ENCODE measurements at regions of chr17 and their contacts with region 1.

Region 1: DNA sequence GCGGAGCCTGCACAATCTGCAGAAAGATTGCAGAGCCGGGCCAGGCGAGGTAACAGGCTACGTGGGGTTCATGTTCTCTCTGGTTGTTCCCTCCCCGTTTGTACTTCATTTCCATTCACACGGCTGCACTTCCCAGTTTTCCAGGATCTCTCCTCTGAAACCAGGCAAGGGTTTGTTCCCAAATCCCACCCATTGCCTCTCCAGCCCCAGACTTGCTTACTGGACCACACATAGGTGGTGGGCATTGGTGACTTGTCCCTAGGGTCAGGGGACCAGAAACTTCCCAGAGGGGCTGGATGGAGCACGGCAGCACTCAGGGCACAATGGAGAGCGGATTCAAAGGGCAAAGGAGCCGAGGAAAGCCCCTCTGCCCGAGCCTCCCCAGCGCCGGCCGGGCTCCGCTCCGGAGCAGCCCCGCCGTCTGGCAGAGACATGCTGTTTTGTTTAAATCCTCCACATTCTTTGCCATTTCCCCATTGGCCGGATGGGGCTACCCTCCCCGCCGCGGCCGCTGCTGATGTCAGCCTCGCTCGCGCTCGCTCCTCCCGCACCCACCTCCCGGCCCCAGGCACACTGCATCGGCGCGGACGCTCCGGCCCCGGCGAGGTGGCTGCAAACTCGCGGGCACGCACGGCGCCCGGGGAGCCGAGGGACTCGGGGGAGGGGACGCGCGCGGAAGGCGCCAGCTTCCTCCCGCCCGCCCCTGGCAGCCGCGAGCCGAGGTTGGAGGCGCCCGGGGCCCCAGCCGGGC is at the start of gene PITPNC1:
- DNase-seq: peak; percentile 93
- ATAC-seq: peak; percentile 78
- H3K4me3 Mint-ChIP-seq: peak within 1 kb of the TSS; percentile 83
- H3K27ac Mint-ChIP-seq: peak within 1 kb of the TSS; percentile 87
- H3K4me1 Mint-ChIP-seq: peaks cover 42% of the 10 kb centered on the region
- H3K27me3 Mint-ChIP-seq: no peaks in the 10 kb centered on the region
- total RNA-seq, gene PITPNC1: 44.9 to 67.6 TPM

Region 2: DNA sequence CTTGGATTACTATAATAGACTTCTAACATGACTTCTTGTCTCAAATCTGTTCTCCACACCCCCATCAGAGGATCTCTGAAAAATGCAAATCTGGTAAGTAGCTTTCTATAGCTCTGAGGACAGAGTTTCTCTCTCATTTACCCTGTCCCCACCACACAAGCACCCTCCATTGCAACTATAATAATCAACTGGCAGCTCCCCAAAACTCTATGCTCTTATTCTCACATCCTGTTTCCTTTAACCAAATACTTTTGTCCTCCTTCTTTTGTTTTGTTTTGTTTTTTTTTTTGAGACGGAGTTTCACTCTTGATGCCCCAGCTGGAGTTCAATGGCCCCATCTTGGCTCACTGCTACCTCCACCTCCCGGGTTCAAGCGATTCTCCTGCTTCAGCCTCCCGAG is 205.4 kb before region 1 on chr17:
- CTCF ChIA-PET with region 1: no interaction called
- DNase-seq: no peak
- ATAC-seq: no peak
- H3K4me3 Mint-ChIP-seq: no peak overlapping the region
- H3K27ac Mint-ChIP-seq: no peak overlapping the region
- H3K4me1 Mint-ChIP-seq: peaks cover 6% of the 10 kb centered on the region
- H3K27me3 Mint-ChIP-seq: no peaks in the 10 kb centered on the region

Region 3: DNA sequence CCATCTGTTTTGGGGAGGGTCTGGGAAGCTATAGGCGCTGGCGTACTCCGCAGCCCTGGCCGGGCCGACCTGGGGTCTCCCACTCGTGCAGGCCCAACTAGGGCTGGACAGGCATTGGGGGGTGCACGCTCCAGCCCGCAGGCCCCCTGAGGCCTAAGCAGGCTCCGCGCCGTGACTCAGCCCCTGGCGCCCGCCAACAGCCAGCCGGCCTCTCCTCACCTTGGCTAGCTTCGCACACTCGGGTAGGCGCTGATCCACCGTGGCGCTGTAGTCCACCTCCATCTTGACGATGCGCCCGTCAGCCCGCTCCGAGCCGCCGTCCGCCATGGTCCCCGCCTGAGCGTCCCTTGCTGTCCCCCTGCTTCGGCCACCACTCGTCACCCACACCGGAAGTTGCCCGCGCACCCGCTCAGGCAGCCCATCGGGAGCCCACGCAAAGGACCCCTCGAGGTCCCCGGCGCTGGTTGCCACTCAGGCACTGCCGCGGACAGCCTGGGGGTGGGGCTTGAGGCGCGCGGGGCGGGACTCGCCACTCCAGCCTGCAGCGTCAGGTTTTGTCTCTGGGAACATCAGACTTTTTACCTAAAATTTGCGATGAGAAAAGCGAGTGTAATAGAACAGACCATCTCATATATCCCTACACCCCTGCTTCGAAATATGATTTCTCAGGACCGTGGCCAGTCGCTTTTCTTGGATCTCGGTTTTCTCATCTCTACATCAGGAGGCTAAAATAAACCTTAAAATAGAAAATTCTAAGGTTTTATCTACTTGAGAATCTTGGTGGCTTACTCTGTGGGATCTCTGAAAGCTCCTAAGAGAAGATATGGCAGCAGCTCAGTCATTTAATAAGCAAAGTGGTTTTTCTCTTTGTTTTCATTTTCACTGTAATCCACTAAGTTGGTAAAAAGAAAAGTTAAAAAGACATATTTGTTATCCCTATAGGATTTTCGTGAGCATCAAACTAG is 10.4 kb before region 1 on chr17 and contains the start of gene PSMD12:
- CTCF ChIA-PET with region 1: interaction called, 47 read pairs
- DNase-seq: peak; percentile 96
- ATAC-seq: peak; percentile 88
- H3K4me3 Mint-ChIP-seq: peak within 1 kb of the TSS; percentile 89
- H3K27ac Mint-ChIP-seq: peak within 1 kb of the TSS; percentile 89
- H3K4me1 Mint-ChIP-seq: peaks cover 52% of the 10 kb centered on the region
- H3K27me3 Mint-ChIP-seq: no peaks in the 10 kb centered on the region
- total RNA-seq, gene PSMD12: 52.8 to 63.2 TPM

Region 4: DNA sequence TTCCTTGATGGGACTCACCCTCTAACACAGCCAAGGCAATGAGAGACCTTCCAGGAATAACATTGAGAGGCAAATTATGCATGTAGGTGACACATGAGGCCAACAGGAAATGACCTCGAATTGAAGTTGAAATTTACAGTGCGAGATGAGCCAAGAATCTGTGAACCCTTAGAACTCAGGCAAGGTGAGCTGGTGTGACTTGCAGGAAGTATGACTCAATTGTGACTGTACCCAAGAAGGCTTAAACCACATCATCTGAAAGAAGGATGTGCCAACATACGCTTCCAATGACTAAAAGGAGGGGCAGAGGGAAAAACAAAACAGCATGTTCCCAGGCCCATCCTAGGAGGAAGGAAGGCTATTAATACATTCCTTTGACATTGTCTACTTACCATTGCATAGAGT is 45.0 kb after region 1 on chr17:
- CTCF ChIA-PET with region 1: interaction called, 17 read pairs
- DNase-seq: peak; percentile 77
- ATAC-seq: peak; percentile 98
- H3K4me3 Mint-ChIP-seq: no peak overlapping the region
- H3K27ac Mint-ChIP-seq: peak overlapping the region; percentile 77
- H3K4me1 Mint-ChIP-seq: peaks cover 57% of the 10 kb centered on the region
- H3K27me3 Mint-ChIP-seq: no peaks in the 10 kb centered on the region

Region 5: DNA sequence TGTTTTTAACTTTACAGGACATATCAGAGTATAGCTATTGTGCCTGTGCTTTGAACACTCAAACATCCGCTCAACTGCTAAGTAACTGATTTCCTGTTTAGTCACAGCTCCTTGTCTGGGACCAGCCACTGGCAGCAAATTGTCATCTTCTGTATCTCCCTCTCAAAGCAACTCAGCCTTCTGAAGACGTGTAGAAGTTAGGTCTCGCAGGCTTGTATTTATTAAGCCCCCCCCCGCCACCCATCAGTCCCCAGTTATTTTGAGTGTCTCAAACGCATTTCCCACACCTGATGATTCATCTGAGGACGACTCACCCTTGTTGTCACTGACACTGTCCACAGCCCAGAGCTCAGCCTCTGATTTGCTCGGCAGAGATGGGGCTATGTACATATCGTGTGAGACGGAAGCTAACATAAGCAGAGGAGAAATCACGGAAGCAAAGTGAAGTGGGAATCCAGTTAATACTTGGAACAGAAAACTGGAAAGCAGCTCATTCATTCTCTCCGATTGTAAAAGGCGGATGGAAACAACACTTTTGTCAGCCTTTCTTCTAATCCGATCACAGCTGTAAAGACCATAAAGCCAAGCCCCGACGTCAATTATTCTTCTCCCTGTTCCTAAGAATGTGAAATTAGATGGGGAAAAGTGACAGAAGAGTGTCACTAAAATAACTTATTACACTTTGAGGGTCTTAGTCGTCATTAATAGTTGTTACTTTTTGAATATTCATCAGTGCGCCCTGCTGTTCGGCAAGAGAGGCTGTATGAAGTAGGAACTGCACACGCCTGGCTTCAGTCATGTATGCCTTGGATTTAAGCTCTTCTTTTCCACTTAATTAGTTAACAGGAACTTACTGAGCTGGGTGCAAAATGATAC is 64.4 kb after region 1 on chr17:
- CTCF ChIA-PET with region 1: interaction called, 34 read pairs
- DNase-seq: peak; percentile 89
- ATAC-seq: peak; percentile 92
- H3K4me3 Mint-ChIP-seq: peak overlapping the region; percentile 73
- H3K27ac Mint-ChIP-seq: peak overlapping the region; percentile 99
- H3K4me1 Mint-ChIP-seq: peaks cover 55% of the 10 kb centered on the region
- H3K27me3 Mint-ChIP-seq: no peaks in the 10 kb centered on the region

Region 6: DNA sequence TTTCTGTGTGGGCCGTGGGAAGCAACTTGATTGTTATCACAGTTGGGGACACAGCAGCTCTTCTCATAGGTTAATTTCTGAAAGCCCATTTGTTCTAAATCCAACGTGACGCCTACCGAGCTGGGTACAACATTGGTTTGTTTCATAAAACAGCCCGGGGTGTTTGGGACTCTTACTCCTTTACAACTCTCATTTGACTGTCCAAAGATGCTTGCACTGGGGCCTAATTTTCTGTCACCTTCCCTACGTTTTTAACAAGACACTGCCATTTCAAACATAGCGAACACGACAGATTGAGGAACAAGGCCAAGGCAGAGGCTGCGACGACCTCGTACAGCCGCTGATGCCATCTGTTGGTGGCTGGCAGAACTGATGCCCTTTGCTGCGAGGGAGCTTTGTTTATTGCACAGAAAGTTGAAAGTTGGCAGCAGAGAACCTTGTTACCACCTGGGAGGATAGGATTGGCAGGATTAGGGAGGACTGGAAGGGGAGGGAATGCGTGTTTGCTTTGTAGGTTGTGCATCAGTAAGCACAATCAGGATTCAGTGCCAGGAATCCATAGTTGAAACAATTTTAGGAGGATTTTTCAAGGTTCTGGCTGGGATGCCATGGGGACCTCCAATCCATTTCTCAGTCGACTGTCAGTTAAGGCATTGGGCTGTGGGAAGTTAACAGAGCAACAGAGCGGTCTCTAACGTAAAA is 98.5 kb after region 1 on chr17:
- CTCF ChIA-PET with region 1: interaction called, 209 read pairs
- DNase-seq: peak; percentile 92
- ATAC-seq: peak; percentile 84
- H3K4me3 Mint-ChIP-seq: peak overlapping the region; percentile 64
- H3K27ac Mint-ChIP-seq: peak overlapping the region; percentile 93
- H3K4me1 Mint-ChIP-seq: peaks cover 68% of the 10 kb centered on the region
- H3K27me3 Mint-ChIP-seq: no peaks in the 10 kb centered on the region

Region 7: GRCh38 chr17:67629971-67630320 is 253.0 kb after region 1 on chr17:
- CTCF ChIA-PET with region 1: interaction called, 16 read pairs
- DNase-seq: no peak
- ATAC-seq: no peak
- H3K4me3 Mint-ChIP-seq: no peak overlapping the region
- H3K27ac Mint-ChIP-seq: no peak overlapping the region
- H3K4me1 Mint-ChIP-seq: no peaks in the 10 kb centered on the region
- H3K27me3 Mint-ChIP-seq: no peaks in the 10 kb centered on the region

Region 8: GRCh38 chr17:67689534-67690177 is 312.7 kb after region 1 on chr17:
- CTCF ChIA-PET with region 1: interaction called, 35 read pairs
- DNase-seq: peak; percentile 56
- ATAC-seq: no peak
- H3K4me3 Mint-ChIP-seq: no peak overlapping the region
- H3K27ac Mint-ChIP-seq: no peak overlapping the region
- H3K4me1 Mint-ChIP-seq: peaks cover 4% of the 10 kb centered on the region
- H3K27me3 Mint-ChIP-seq: no peaks in the 10 kb centered on the region